Activated CD4-positive, alpha-beta memory T cell treated with anti-CD3 and anti-CD28 coated beads for 36 hours (primary cell): ENCODE measurements at regions of chr10 and their contacts with region 1.

Region 1: DNA sequence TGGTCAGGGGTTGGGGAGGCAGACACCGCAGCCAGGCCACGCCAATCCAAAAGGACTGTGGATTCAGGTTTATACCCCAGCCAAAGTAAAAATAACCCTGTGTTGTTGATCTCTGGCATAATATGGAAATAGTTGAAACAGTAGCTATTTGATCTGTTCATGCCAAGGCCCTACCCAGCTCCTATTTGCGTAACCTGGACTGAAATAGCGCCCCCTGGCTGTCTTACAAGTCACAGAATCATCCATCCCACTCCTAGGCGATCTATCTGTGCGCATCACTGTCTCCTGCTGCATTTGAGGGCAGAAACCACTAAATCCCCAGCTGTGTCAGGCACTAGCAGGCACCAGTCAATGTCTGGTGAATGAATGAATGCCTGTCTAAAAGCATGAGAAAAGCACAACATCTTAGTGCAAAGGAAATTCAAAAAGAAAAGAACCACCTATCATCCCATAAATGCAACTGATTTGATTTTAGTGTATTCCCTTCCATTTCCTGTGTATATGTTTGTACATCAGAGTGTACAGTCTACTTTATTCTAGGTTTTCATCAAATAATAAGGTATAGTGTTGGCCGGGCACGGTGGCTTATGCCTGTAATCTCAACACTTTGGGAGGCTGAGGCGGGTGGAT is 160.0 kb downstream of the SLIT1 start:
- DNase-seq: peak; percentile 73
- H3K4me3 Mint-ChIP-seq: no peak overlapping the region
- H3K27ac Mint-ChIP-seq: no peak overlapping the region
- H3K4me1 Mint-ChIP-seq: no peaks in the 10 kb centered on the region
- H3K27me3 Mint-ChIP-seq: no peaks in the 10 kb centered on the region

Region 2: GRCh38 chr10:96642973-96643372 is 382.8 kb before region 1 on chr10:
- CTCF ChIA-PET with region 1: interaction called, 41 read pairs
- POLR2A ChIA-PET with region 1: no interaction called
- intact Hi-C with region 1: loop called (anchors 2 kb)
- DNase-seq: peak; percentile 86
- H3K4me3 Mint-ChIP-seq: no peak overlapping the region
- H3K27ac Mint-ChIP-seq: no peak overlapping the region
- H3K4me1 Mint-ChIP-seq: peaks cover 18% of the 10 kb centered on the region
- H3K27me3 Mint-ChIP-seq: no peaks in the 10 kb centered on the region

Region 3: DNA sequence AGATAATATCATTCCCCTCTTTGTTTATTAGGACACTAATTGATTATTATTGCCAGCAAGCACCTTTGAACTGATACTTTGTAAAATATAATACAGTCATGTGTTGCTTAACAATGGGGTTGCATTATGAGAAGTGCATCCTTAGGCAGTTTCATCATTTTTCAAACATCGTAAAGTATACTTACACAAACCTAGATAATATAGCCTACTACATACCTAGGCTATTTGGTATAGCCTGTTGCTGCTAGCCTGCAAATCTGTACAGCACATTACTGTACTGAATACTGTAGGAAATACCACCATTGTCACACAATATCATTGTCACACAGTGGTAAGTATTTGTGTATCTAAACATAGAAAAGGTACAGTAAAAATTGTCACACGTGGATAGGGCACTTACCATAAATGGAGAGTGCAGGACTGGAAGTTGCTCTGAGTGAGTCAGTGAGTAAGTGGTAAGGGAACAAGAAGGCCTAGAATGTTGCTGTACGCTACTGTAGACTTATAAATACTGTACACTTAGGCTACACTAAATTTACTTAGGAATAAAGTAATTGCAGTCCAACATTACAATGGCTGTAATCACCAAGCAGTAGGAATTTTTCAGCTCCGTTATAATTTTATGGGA is 122.9 kb before region 1 on chr10:
- CTCF ChIA-PET with region 1: interaction called, 10 read pairs
- POLR2A ChIA-PET with region 1: no interaction called
- intact Hi-C with region 1: no loop called
- DNase-seq: no peak
- H3K4me3 Mint-ChIP-seq: no peak overlapping the region
- H3K27ac Mint-ChIP-seq: no peak overlapping the region
- H3K4me1 Mint-ChIP-seq: peaks cover 51% of the 10 kb centered on the region
- H3K27me3 Mint-ChIP-seq: no peaks in the 10 kb centered on the region

Region 4: GRCh38 chr10:96960872-96961271 is 64.9 kb before region 1 on chr10:
- CTCF ChIA-PET with region 1: interaction called, 11 read pairs
- POLR2A ChIA-PET with region 1: no interaction called
- intact Hi-C with region 1: no loop called
- DNase-seq: no peak
- H3K4me3 Mint-ChIP-seq: no peak overlapping the region
- H3K27ac Mint-ChIP-seq: peak overlapping the region; percentile 6
- H3K4me1 Mint-ChIP-seq: peaks cover 11% of the 10 kb centered on the region
- H3K27me3 Mint-ChIP-seq: no peaks in the 10 kb centered on the region

Region 5: DNA sequence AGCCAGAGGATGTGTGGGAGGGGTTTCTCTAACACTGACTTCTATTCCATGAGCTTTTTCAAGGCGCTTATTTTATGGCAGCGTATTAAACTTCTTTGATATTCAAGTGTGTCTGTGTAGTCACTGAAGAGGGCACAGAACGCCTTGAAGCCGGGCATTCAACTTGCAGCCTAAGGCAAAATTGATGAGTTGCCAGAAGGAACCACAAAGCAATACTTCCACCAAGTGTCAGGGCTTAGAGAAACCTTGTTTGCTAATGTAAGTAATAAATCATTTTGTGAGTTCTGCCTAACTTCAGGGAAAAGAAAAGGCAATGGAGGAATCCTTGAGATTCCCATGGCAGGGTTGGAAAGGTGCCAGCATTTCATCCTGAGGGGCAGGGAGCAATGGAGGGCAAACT is 29.9 kb before region 1 on chr10:
- CTCF ChIA-PET with region 1: interaction called, 10 read pairs
- POLR2A ChIA-PET with region 1: no interaction called
- intact Hi-C with region 1: no loop called
- DNase-seq: no peak
- H3K4me3 Mint-ChIP-seq: no peak overlapping the region
- H3K27ac Mint-ChIP-seq: no peak overlapping the region
- H3K4me1 Mint-ChIP-seq: peaks cover 6% of the 10 kb centered on the region
- H3K27me3 Mint-ChIP-seq: no peaks in the 10 kb centered on the region

Region 6: GRCh38 chr10:97089209-97089870 is 63.6 kb after region 1 on chr10:
- CTCF ChIA-PET with region 1: no interaction called
- POLR2A ChIA-PET with region 1: no interaction called
- intact Hi-C with region 1: no loop called
- DNase-seq: no peak
- H3K4me3 Mint-ChIP-seq: no peak overlapping the region
- H3K27ac Mint-ChIP-seq: no peak overlapping the region
- H3K4me1 Mint-ChIP-seq: no peaks in the 10 kb centered on the region
- H3K27me3 Mint-ChIP-seq: peaks cover 23% of the 10 kb centered on the region